GM12878 (cell line): ENCODE measurements at regions of chr1 and their contacts with region 1.

Region 1: GRCh38 chr1:91021686-91022517 is at the start of gene ZNF644:
- DNase-seq: peak; percentile 89
- ATAC-seq: peak; percentile 84
- H3K4me3 ChIP-seq: peak within 1 kb of the TSS; percentile 70
- H3K27ac ChIP-seq: peak within 1 kb of the TSS; percentile 97
- H3K4me1 ChIP-seq: peaks cover 12% of the 10 kb centered on the region
- H3K27me3 ChIP-seq: no peaks in the 10 kb centered on the region
- CTCF ChIP-seq: no peak
- EP300 ChIP-seq: peak in 1 of 2 experiments; percentile 18; a peak in 2 of 4 replicates
- POLR2A ChIP-seq: peak; percentile 90
- RAD21 ChIP-seq: no peak
- polyA plus RNA-seq, gene ZNF644: 28.1 to 34.4 TPM

Region 2: DNA sequence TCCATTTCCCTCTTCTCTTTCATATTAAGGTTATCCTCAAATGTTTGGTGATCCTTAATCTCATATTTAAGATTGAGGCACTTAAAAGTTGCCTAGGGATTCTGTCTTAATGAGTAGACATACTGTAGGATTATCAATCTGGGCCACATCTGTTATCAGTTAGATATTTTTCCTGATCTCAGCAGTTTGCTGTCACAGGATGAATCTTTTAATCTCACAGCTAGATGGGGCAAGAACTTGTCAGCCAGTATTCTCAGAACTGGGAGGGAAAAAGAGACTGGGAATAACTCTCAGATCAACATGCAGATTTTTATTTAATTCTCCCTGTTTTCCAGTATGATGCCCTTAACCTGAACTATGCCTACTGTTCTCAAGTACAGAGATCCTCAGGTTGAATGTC is 14.1 kb before region 1 on chr1:
- CTCF ChIA-PET with region 1: interaction called, 12 read pairs
- POLR2A ChIA-PET with region 1: interaction called, 3 read pairs
- RAD21 ChIA-PET with region 1: no interaction called
- SMC1A ChIA-PET with region 1: interaction called, 17 read pairs
- in situ Hi-C with region 1: no loop called
- intact Hi-C with region 1: no loop called
- DNase-seq: no peak
- ATAC-seq: no peak
- H3K4me3 ChIP-seq: no peak overlapping the region
- H3K27ac ChIP-seq: no peak overlapping the region
- H3K4me1 ChIP-seq: no peaks in the 10 kb centered on the region
- H3K27me3 ChIP-seq: no peaks in the 10 kb centered on the region
- CTCF ChIP-seq: no peak
- EP300 ChIP-seq: no peak
- POLR2A ChIP-seq: no peak
- RAD21 ChIP-seq: no peak

Region 3: DNA sequence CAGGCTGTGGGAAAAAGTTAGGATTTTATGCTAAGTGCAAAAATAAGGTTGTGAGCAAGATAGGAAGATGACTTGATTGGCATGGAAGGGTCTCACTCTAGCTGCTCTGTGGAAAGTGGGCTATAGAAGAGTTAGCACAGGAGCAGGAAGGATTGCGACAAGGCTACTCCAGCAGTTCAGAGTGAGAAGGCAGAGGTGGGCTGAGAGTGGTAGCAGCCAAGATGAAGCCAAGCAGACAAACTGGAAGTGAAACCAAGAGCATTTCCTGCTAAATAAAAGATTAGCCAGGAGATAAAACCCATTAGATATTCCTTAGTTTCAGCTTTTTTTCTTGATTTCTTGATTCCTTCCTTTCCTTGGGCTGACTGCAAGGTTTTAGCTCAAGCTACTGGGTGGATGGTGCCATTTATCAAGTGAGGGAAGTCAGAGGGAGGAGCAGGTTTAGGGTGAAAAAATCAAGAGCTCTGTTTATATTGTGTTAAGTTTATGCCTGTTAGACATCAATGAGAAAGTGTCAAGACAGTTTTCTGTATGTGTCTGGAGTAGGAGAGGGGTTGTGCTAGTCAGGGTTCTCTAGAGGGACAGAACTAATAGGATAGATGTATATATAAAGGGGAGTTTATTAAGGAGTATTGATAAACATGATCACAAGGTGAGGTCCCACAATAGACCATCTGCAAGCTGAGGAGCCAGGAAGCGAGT is 33.0 kb after region 1 on chr1:
- CTCF ChIA-PET with region 1: interaction called, 4 read pairs
- POLR2A ChIA-PET with region 1: no interaction called
- RAD21 ChIA-PET with region 1: interaction called, 8 read pairs
- SMC1A ChIA-PET with region 1: interaction called, 6 read pairs
- in situ Hi-C with region 1: no loop called
- intact Hi-C with region 1: loop called (anchors 5 kb)
- DNase-seq: no peak
- ATAC-seq: peak; percentile 90
- H3K4me3 ChIP-seq: no peak overlapping the region
- H3K27ac ChIP-seq: no peak overlapping the region; the same call in 1 of the 2 replicates
- H3K4me1 ChIP-seq: peaks cover 10% of the 10 kb centered on the region
- H3K27me3 ChIP-seq: no peaks in the 10 kb centered on the region
- CTCF ChIP-seq: no peak
- EP300 ChIP-seq: no peak
- POLR2A ChIP-seq: no peak
- RAD21 ChIP-seq: no peak